ENCODE measurements at regions of chr15 and their contacts with region 1.

Region 1: DNA sequence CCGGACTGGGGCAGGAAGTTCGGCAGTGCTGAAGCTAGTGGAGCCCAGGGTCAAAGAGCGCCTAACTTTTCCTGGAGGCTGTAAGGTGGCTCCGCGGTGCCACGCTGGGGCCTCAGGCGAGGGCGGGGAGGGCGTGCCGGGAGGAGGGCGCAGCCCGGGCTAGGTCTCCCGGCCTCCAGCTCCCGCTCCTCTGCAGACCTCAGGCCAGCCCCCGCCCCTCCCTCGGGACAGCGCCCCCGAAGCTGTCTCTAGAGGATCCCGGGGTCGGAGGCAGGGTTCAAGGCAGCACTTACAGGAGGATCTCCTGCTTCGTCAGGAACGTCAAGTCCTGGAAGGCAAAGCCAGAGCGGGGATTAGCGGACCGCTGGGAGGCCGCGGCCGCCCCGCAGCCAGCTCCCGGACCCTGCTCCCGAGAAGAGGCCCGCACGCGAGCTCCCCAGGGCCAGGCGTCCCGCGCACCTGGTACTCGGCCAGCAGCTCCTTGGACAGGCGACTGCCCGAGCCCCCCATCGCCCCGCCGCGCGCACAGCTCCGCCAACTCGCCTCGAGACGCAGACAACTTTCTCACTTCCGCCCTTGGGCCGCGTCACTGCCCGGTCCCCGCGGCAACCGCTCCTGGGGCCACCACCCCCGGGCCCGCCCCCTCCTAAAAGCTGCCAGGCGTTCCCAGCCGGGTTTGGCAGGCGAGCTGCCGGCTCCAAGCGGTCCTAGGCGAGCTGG is at the start of gene CIB1:
- DNase-seq: no peak
- ATAC-seq: peak; percentile 88
- H3K4me3 ChIP-seq: peak within 1 kb of the TSS; percentile 79
- H3K27ac ChIP-seq: peak within 1 kb of the TSS; percentile 85
- H3K4me1 ChIP-seq: peaks cover 28% of the 10 kb centered on the region
- H3K27me3 ChIP-seq: no peaks in the 10 kb centered on the region
- CTCF ChIP-seq: peak in 2 of 3 experiments; percentile 44 to 61; a peak in 3 of 6 replicates
- EP300 ChIP-seq: peak in 1 of 2 experiments; percentile 8; a peak in 1 of 4 replicates
- POLR2A ChIP-seq: peak; percentile 89
- RAD21 ChIP-seq: no peak
- polyA plus RNA-seq, gene CIB1: 10.8 to 42.5 TPM

Region 2: GRCh38 chr15:89893696-89894455 is 339.7 kb before region 1 on chr15 and contains the start of gene AP3S2:
- CTCF ChIA-PET with region 1: no interaction called
- POLR2A ChIA-PET with region 1: no interaction called
- RAD21 ChIA-PET with region 1: interaction called, 4 read pairs
- SMC1A ChIA-PET with region 1: no interaction called
- in situ Hi-C with region 1: no loop called
- intact Hi-C with region 1: loop called (anchors 5 kb)
- DNase-seq: peak; percentile 73
- ATAC-seq: peak; percentile 90
- H3K4me3 ChIP-seq: peak within 1 kb of the TSS; percentile 97
- H3K27ac ChIP-seq: peak within 1 kb of the TSS; percentile 87
- H3K4me1 ChIP-seq: peaks cover 23% of the 10 kb centered on the region
- H3K27me3 ChIP-seq: no peaks in the 10 kb centered on the region
- CTCF ChIP-seq: no peak
- EP300 ChIP-seq: peak in 1 of 2 experiments; percentile 31; a peak in 1 of 4 replicates
- POLR2A ChIP-seq: peak; percentile 92
- RAD21 ChIP-seq: no peak
- polyA plus RNA-seq, gene AP3S2: 10.0 to 13.1 TPM

Region 3: DNA sequence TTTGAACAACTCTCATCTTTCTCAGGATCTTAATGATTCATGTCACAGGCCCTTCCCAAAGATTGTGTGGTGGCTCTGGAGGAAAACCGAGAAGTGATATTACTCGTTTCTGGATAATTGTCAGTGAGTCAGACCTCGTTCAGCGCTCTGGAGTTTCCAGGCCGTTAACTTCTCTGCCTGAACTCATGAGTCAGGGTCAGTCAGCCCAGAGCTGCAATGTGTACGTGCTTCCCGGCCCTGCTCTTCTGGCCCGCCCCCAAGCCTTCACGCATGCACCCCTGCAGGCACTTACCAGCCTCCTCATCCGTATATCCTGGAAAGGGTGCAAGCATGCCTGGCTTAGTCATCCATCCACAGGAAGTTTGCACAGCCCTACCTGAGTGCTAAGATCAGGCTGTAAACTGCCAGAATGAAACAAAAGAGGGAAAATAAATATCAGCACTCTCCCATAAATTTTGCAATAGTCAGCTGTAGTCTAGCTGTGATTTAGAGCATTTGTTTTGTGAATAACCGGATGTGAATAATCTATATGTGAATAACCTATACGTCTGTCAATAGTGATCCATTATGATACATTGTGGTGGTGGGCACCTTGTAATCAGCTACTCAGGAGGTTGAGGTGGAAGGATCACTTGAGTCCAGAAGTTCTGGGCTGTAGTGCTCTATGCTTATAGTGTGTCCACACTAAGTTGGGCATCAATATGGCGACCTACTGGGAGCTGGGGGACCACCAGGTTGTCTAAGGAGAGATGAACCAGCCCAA is 67.7 kb before region 1 on chr15:
- CTCF ChIA-PET with region 1: no interaction called
- POLR2A ChIA-PET with region 1: interaction called, 18 read pairs
- RAD21 ChIA-PET with region 1: interaction called, 6 read pairs
- SMC1A ChIA-PET with region 1: interaction called, 70 read pairs
- in situ Hi-C with region 1: no loop called
- intact Hi-C with region 1: no loop called
- DNase-seq: peak; percentile 64
- ATAC-seq: peak; percentile 74
- H3K4me3 ChIP-seq: no peak overlapping the region
- H3K27ac ChIP-seq: peak overlapping the region; percentile 48
- H3K4me1 ChIP-seq: peaks cover 34% of the 10 kb centered on the region
- H3K27me3 ChIP-seq: no peaks in the 10 kb centered on the region
- CTCF ChIP-seq: no peak
- EP300 ChIP-seq: no peak
- POLR2A ChIP-seq: no peak
- RAD21 ChIP-seq: no peak

Region 4: GRCh38 chr15:90201130-90201949 is 32.2 kb before region 1 on chr15 and contains the start of gene SEMA4B:
- CTCF ChIA-PET with region 1: interaction called, 19 read pairs
- POLR2A ChIA-PET with region 1: interaction called, 31 read pairs
- RAD21 ChIA-PET with region 1: interaction called, 18 read pairs
- SMC1A ChIA-PET with region 1: interaction called, 8 read pairs
- in situ Hi-C with region 1: no loop called
- intact Hi-C with region 1: no loop called
- DNase-seq: no peak
- ATAC-seq: peak; percentile 94
- H3K4me3 ChIP-seq: peak within 1 kb of the TSS; percentile 95
- H3K27ac ChIP-seq: peak within 1 kb of the TSS; percentile 37; the same call in 1 of the 2 replicates
- H3K4me1 ChIP-seq: peaks cover 14% of the 10 kb centered on the region
- H3K27me3 ChIP-seq: no peaks in the 10 kb centered on the region
- CTCF ChIP-seq: no peak
- EP300 ChIP-seq: no peak
- POLR2A ChIP-seq: peak; percentile 80
- RAD21 ChIP-seq: no peak
- polyA plus RNA-seq, gene SEMA4B: 0.87 to 1.4 TPM

Region 5: DNA sequence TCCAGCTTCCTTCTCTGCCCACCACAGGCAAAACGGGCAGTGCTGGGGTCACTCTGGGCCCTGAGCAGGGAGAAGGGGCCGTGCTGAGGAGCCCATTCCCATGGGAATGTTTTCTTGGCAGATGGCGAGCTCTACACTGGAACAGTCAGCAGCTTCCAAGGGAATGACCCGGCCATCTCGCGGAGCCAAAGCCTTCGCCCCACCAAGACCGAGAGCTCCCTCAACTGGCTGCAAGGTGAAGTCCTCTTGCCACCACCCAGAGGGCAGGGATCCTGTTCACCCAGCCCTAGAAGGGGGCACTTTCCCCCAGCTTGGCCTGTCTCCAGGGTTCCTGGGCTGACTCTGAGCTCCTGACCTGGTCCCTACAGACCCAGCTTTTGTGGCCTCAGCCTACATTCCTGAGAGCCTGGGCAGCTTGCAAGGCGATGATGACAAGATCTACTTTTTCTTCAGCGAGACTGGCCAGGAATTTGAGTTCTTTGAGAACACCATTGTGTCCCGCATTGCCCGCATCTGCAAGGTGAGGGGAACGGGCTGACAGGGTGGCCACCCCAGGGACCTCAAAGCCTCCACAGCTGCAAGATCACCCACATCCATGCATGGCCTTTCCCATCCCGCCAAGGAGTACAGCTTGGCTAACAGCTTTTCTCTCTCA is 12.2 kb before region 1 on chr15:
- CTCF ChIA-PET with region 1: interaction called, 38 read pairs
- POLR2A ChIA-PET with region 1: interaction called, 15 read pairs
- RAD21 ChIA-PET with region 1: interaction called, 16 read pairs
- SMC1A ChIA-PET with region 1: interaction called, 24 read pairs
- in situ Hi-C with region 1: no loop called
- intact Hi-C with region 1: no loop called
- DNase-seq: no peak
- ATAC-seq: peak; percentile 83
- H3K4me3 ChIP-seq: no peak overlapping the region
- H3K27ac ChIP-seq: no peak overlapping the region
- H3K4me1 ChIP-seq: peaks cover 2% of the 10 kb centered on the region; the same call in 1 of the 2 replicates
- H3K27me3 ChIP-seq: no peaks in the 10 kb centered on the region
- CTCF ChIP-seq: peak; percentile 66 to 82 (median 81)
- EP300 ChIP-seq: no peak
- POLR2A ChIP-seq: no peak
- RAD21 ChIP-seq: peak; percentile 82

Region 6: DNA sequence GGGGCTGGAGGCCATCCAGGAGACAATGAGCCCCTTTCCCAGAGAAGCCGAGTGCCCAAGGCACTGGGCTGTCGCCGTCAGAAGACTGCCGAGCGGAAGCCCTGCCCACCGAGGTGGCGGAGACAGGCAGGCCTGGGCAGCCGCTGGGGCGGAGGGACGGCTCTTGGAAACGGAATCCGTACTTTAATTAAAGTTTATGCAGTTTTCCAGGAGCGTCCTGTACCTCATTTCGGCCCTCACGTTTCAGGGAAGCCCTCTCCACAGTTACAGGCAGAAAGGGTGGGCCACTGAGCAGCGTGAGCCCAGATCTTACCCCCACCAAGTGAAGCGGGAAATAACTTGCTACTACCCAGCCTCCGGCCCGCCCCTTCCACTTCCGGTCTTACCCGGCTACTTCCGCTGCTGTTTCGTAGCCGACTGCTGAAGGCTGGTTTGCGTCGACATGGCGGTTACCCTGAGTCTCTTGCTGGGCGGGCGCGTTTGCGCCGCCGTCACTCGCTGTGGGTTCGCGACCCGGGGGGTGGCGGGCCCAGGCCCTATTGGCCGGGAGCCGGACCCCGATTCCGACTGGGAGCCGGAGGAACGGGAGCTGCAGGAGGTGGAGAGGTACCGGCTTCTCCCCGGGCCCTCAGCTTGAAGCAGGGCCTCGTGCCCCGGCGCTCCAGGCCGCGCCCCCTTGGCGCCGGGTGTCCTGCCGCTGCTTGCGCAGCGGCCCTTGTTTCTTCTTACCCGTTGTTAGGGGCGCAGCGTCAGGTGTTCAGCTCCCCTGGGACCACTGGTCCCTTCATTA is 31.9 kb after region 1 on chr15 and contains the start of gene NGRN:
- CTCF ChIA-PET with region 1: interaction called, 10 read pairs
- POLR2A ChIA-PET with region 1: interaction called, 25 read pairs
- RAD21 ChIA-PET with region 1: interaction called, 47 read pairs
- SMC1A ChIA-PET with region 1: interaction called, 24 read pairs
- in situ Hi-C with region 1: no loop called
- intact Hi-C with region 1: no loop called
- DNase-seq: peak; percentile 69
- ATAC-seq: peak; percentile 91
- H3K4me3 ChIP-seq: peak within 1 kb of the TSS; percentile 82
- H3K27ac ChIP-seq: peak within 1 kb of the TSS; percentile 87
- H3K4me1 ChIP-seq: peaks cover 13% of the 10 kb centered on the region
- H3K27me3 ChIP-seq: no peaks in the 10 kb centered on the region
- CTCF ChIP-seq: no peak
- EP300 ChIP-seq: 0 out of 4 replicates have a peak, but pooled peaks of 1 of the 2 experiments have one; percentile 10
- POLR2A ChIP-seq: peak; percentile 95
- RAD21 ChIP-seq: no peak
- polyA plus RNA-seq, gene NGRN: 5.8 to 11.2 TPM

Region 7: DNA sequence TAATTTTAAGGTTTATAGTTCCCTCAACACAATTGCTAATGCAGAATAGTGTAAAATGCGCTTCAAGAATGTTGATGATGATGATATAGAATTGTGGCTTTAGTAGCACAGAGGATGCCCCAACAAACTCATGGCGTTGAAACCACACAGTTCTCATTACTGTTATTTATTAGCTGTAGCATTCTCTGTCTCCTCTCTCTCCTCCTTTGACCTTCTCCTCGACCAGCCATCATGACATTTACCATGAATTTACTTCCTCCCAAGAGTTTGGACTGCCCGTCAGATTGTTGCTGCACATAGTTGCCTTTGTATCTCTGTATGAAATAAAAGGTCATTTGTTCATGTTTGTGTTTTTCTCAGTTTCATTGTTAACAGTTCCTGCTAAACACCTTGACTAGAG is 268.4 kb after region 1 on chr15:
- CTCF ChIA-PET with region 1: no interaction called
- POLR2A ChIA-PET with region 1: no interaction called
- RAD21 ChIA-PET with region 1: no interaction called
- SMC1A ChIA-PET with region 1: no interaction called
- in situ Hi-C with region 1: no loop called
- intact Hi-C with region 1: no loop called
- DNase-seq: no peak
- ATAC-seq: no peak
- H3K4me3 ChIP-seq: no peak overlapping the region
- H3K27ac ChIP-seq: no peak overlapping the region
- H3K4me1 ChIP-seq: no peaks in the 10 kb centered on the region
- H3K27me3 ChIP-seq: no peaks in the 10 kb centered on the region
- CTCF ChIP-seq: no peak
- EP300 ChIP-seq: no peak
- POLR2A ChIP-seq: no peak
- RAD21 ChIP-seq: no peak

Region 8: DNA sequence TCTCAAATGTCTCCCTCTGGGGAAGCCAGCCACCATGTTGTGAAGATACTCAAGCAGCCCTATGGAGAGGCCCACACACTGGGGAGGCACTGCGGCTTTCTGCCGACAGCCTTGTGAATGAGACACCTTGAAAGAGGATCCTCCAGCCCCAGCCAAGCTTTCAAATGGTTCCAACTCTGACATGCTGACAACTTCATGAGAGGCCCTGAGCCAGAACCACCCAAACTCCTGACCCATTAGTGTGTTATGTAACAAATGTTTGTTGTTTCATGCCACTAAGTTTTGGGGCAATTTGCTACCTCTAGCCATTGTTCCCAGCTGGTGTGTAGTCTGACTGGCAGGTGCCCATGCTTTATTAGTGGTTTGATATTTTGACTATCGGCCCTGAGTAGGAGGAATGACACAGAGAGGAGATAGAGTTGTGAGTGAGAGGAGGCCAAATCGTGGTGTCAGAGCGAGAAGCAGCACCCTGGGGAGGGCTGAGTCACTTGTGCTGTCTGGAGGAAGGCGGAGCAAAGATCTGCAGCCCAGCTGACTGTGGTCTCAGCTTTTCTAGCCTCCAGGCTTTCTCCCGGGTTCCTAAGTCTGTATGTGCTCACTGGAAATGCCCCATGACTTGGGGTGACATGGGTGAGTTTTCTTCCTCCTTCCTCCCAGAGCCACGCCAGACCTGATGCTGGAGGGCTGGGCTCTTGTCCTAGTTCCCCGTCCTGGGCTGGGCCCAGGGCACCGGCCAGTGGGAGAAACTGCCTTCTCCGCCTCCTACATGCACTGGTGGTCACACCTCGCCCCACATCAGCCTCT is 426.9 kb after region 1 on chr15:
- CTCF ChIA-PET with region 1: no interaction called
- POLR2A ChIA-PET with region 1: no interaction called
- RAD21 ChIA-PET with region 1: no interaction called
- SMC1A ChIA-PET with region 1: no interaction called
- in situ Hi-C with region 1: no loop called
- intact Hi-C with region 1: loop called (anchors 5 kb)
- DNase-seq: peak; percentile 86
- ATAC-seq: peak; percentile 72
- H3K4me3 ChIP-seq: peak overlapping the region; percentile 58
- H3K27ac ChIP-seq: peak overlapping the region; percentile 100
- H3K4me1 ChIP-seq: peaks cover 73% of the 10 kb centered on the region
- H3K27me3 ChIP-seq: no peaks in the 10 kb centered on the region
- CTCF ChIP-seq: no peak
- EP300 ChIP-seq: 0 out of 4 replicates have a peak, but pooled peaks of 1 of the 2 experiments have one; percentile 29
- POLR2A ChIP-seq: peak; percentile 77
- RAD21 ChIP-seq: no peak